ENCODE measurements at regions of chr9 and their contacts with region 1.

Region 1: DNA sequence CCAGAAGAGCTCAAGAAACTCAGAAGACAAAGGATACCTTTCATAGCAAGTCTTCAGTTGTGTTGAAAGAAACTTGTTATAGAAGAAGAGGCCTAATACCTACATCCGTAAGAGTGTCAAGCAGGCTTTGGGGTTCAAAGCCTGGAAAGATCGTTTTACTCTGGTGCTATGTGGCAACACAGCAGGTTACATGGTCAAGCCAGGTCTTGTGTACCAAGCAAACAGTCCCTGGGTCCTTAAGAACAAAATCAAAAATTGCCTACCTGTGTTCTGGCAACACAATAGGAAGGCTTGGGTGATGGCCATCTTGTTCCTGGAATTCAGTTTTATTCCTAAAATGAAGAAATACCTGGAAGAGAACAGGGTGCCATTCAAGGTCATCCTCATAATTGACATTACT is 32.0 kb upstream of the LRRC19 start:
- DNase-seq: no peak
- ATAC-seq: no peak
- H3K4me3 ChIP-seq: no peak overlapping the region
- H3K27ac ChIP-seq: no peak overlapping the region
- H3K4me1 ChIP-seq: no peaks in the 10 kb centered on the region
- H3K27me3 ChIP-seq: no peaks in the 10 kb centered on the region
- CTCF ChIP-seq: no peak

Region 2: DNA sequence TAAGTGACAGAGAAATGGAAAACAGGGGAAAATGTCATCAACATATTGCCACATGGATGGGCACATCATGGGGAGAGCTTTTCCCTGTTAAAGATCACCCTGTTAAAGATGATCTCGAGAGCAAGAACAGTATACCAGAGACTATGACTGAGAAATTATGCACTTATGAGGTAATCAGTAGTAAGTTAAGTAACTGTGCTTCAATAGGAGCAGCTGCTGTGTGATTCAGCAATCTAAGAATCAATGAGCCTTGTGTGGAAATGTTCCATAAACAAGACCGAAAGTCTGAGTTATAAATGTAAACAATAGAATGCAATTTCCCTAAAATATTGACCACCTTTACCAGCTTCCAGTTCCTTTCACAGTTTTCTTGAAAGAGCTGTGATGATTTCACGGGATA is 727.2 kb before region 1 on chr9:
- CTCF ChIA-PET with region 1: no interaction called
- POLR2A ChIA-PET with region 1: no interaction called
- in situ Hi-C with region 1: no loop called
- intact Hi-C with region 1: no loop called
- DNase-seq: no peak
- ATAC-seq: no peak
- H3K4me3 ChIP-seq: no peak overlapping the region
- H3K27ac ChIP-seq: no peak overlapping the region
- H3K4me1 ChIP-seq: no peaks in the 10 kb centered on the region
- H3K27me3 ChIP-seq: no peaks in the 10 kb centered on the region
- CTCF ChIP-seq: no peak

Region 3: GRCh38 chr9:27276193-27277030 is 238.9 kb after region 1 on chr9:
- CTCF ChIA-PET with region 1: no interaction called
- POLR2A ChIA-PET with region 1: no interaction called
- in situ Hi-C with region 1: no loop called
- intact Hi-C with region 1: loop called (anchors 5 kb)
- DNase-seq: peak; percentile 10
- ATAC-seq: no peak
- H3K4me3 ChIP-seq: peak overlapping the region in 1 of 2 experiments; percentile 16; a peak in 1 of 4 replicates
- H3K27ac ChIP-seq: no peak overlapping the region
- H3K4me1 ChIP-seq: no peaks in the 10 kb centered on the region
- H3K27me3 ChIP-seq: no peaks in the 10 kb centered on the region
- CTCF ChIP-seq: peak; percentile 50; the same call in 1 of the 2 replicates